ENCODE measurements at regions of chr5 and their contacts with region 1.

Region 1: GRCh38 chr5:122774861-122775549 is at the start of gene SNX2:
- DNase-seq: peak; percentile 96
- ATAC-seq: peak; percentile 88
- H3K4me3 ChIP-seq: peak within 1 kb of the TSS; percentile 95 to 100 (median 99)
- H3K4me3 Mint-ChIP-seq: peak within 1 kb of the TSS; percentile 89
- H3K27ac ChIP-seq: peak within 1 kb of the TSS; percentile 100
- H3K27ac Mint-ChIP-seq: peak within 1 kb of the TSS; percentile 86
- H3K4me1 ChIP-seq: peaks cover 23 to 26% of the 10 kb centered on the region in 2 donors
- H3K4me1 Mint-ChIP-seq: peaks cover 35% of the 10 kb centered on the region
- H3K27me3 ChIP-seq: no peaks in the 10 kb centered on the region
- H3K27me3 Mint-ChIP-seq: no peaks in the 10 kb centered on the region
- CTCF ChIP-seq: peak; percentile 58
- total RNA-seq, gene SNX2: 266 and 270 TPM in 2 replicates

Region 2: GRCh38 chr5:122515709-122516431 is 259.1 kb before region 1 on chr5:
- CTCF ChIA-PET with region 1: interaction called, 3 read pairs
- POLR2A ChIA-PET with region 1: no interaction called
- intact Hi-C with region 1: loop called (anchors 10 kb)
- DNase-seq: peak; percentile 77
- ATAC-seq: peak; percentile 73
- H3K4me3 ChIP-seq: no peak overlapping the region
- H3K4me3 Mint-ChIP-seq: no peak overlapping the region
- H3K27ac ChIP-seq: no peak overlapping the region
- H3K27ac Mint-ChIP-seq: no peak overlapping the region
- H3K4me1 ChIP-seq: peaks cover 0 to 3% of the 10 kb centered on the region in 2 donors
- H3K4me1 Mint-ChIP-seq: peaks cover 4% of the 10 kb centered on the region
- H3K27me3 ChIP-seq: peaks cover 0 to 4% (median 0%) of the 10 kb centered on the region in 4 experiments
- H3K27me3 Mint-ChIP-seq: peaks cover 4% of the 10 kb centered on the region
- CTCF ChIP-seq: peak; percentile 89

Region 3: GRCh38 chr5:122661496-122662180 is 113.4 kb before region 1 on chr5:
- CTCF ChIA-PET with region 1: no interaction called
- POLR2A ChIA-PET with region 1: no interaction called
- intact Hi-C with region 1: no loop called
- DNase-seq: no peak
- ATAC-seq: no peak
- H3K4me3 ChIP-seq: no peak overlapping the region
- H3K4me3 Mint-ChIP-seq: no peak overlapping the region
- H3K27ac ChIP-seq: no peak overlapping the region
- H3K27ac Mint-ChIP-seq: no peak overlapping the region
- H3K4me1 ChIP-seq: peaks cover 0 to 5% of the 10 kb centered on the region in 2 donors
- H3K4me1 Mint-ChIP-seq: peaks cover 9% of the 10 kb centered on the region
- H3K27me3 ChIP-seq: no peaks in the 10 kb centered on the region
- H3K27me3 Mint-ChIP-seq: no peaks in the 10 kb centered on the region
- CTCF ChIP-seq: no peak

Region 4: DNA sequence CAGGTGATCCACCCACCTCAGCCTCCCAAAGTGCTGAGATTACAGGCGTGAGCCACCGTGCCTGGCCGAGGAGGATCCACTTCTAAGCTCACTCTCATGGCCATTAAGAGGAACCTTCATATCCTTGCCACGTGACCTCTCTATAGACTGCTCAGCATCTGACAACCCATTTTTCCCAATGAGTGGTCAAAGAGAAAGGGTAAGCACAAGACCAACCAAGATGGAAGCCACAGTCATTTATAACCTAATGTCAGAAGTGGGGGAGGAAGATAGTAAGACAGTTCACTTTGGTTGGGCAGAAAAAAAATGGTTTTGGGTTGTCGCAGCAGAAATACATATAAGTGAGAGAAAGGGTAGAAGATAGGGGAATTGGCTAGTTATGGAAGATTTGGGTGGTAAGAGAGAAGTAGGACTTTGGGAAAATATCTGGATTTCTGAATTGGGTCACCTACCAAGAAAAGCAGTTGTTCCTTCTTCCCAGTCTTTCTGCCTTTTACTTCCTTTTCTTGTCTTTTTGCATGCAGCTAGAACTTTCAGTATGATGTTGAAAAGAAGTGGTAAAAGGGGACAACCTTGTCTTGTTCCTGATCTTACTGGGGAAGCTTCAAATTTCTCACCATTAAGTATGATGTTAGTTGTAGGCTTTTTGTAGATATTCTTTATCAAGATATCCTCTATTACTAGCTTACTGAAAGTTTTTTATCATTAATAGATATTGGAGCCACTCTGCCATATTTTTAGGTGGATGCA is 15.5 kb after region 1 on chr5:
- CTCF ChIA-PET with region 1: interaction called, 5 read pairs
- POLR2A ChIA-PET with region 1: interaction called, 11 read pairs
- intact Hi-C with region 1: loop called (anchors 2 kb)
- DNase-seq: no peak
- ATAC-seq: no peak
- H3K4me3 ChIP-seq: no peak overlapping the region
- H3K4me3 Mint-ChIP-seq: peak overlapping the region; percentile 21
- H3K27ac ChIP-seq: peak overlapping the region in 1 of 2 donors; percentile 14
- H3K27ac Mint-ChIP-seq: peak overlapping the region; percentile 42
- H3K4me1 ChIP-seq: peaks cover 21 to 44% of the 10 kb centered on the region in 2 donors
- H3K4me1 Mint-ChIP-seq: peaks cover 62% of the 10 kb centered on the region
- H3K27me3 ChIP-seq: no peaks in the 10 kb centered on the region
- H3K27me3 Mint-ChIP-seq: no peaks in the 10 kb centered on the region
- CTCF ChIP-seq: no peak

Region 5: DNA sequence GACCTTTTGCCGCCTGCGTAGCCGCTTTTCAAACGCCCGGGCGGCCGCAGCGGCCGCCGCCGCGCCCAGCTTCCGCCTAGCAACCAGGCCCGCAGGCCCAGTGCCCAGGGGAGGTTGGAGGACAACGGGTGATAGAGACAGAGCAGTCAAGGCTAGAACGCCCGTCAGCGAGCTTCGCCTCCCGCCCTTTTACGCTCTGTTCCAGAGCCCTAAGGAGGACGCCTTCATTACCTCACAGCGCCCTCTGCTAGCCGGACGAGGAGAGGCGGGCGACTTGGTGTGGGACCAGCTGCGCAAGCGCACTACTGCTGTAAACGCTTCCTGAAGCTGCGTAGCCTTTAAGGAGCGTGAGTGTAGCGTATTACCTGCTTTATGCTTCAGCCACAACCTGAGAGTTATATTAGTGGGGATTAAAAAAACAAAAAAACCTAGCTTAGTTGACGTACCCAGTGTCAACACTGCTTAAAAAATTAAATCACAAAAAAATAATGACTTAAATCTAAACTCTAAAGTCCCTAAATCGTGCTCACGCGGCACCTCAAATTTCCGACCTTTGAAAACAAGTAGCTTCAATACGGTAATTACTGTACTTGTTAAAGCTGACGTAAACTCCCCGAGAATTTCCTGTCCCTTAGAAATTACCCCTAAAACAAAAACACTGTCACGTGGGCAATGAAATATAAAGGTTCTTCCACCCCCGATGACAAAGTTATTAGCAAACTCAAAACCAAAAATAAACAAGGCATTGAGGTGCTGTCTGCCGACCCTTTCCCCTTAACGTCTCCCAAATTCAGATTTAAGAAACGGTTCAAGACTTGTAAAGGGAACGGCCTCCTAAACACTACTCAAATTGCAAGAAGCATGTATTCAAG is 648.5 kb after region 1 on chr5 and contains the start of gene CEP120:
- CTCF ChIA-PET with region 1: interaction called, 4 read pairs
- POLR2A ChIA-PET with region 1: no interaction called
- intact Hi-C with region 1: loop called (anchors 1 kb)
- DNase-seq: peak; percentile 99
- ATAC-seq: peak; percentile 97
- H3K4me3 ChIP-seq: peak within 1 kb of the TSS; percentile 51 to 90 (median 89)
- H3K4me3 Mint-ChIP-seq: no peak within 1 kb of the TSS
- H3K27ac ChIP-seq: peak within 1 kb of the TSS; percentile 96 to 99
- H3K27ac Mint-ChIP-seq: no peak within 1 kb of the TSS
- H3K4me1 ChIP-seq: peaks cover 32 to 34% of the 10 kb centered on the region in 2 donors
- H3K4me1 Mint-ChIP-seq: peaks cover 22% of the 10 kb centered on the region
- H3K27me3 ChIP-seq: no peaks in the 10 kb centered on the region
- H3K27me3 Mint-ChIP-seq: no peaks in the 10 kb centered on the region
- CTCF ChIP-seq: peak; percentile 87
- total RNA-seq, gene CEP120: 89.7 and 97.9 TPM in 2 replicates

Measured in B cell (primary cell).